ENCODE measurements at regions of chr1 and their contacts with region 1.

Region 1: DNA sequence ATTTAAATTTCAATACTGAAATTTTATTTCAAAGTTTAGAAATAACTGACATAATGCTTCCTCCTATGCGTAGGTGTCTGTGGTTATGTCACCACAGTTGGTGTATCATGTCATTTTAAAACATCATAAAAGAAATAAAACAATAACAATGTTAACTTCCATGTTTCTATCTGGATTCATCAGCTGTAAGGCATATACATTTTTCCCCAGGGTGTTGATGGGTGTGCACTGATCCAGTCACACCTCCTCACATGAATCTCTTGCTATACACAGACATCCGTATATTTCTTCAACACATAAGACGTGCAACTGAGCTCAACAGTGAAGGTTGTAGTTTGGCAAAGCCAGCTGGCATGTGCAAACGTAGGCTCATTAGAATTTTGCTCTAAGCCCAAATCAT is 6.2 kb downstream of the KCNA3 start:
- DNase-seq: peak; percentile 25
- H3K4me3 Mint-ChIP-seq: peak overlapping the region; percentile 73
- H3K27ac Mint-ChIP-seq: peak overlapping the region; percentile 79
- H3K4me1 Mint-ChIP-seq: peaks cover 12% of the 10 kb centered on the region
- H3K27me3 Mint-ChIP-seq: no peaks in the 10 kb centered on the region

Region 2: DNA sequence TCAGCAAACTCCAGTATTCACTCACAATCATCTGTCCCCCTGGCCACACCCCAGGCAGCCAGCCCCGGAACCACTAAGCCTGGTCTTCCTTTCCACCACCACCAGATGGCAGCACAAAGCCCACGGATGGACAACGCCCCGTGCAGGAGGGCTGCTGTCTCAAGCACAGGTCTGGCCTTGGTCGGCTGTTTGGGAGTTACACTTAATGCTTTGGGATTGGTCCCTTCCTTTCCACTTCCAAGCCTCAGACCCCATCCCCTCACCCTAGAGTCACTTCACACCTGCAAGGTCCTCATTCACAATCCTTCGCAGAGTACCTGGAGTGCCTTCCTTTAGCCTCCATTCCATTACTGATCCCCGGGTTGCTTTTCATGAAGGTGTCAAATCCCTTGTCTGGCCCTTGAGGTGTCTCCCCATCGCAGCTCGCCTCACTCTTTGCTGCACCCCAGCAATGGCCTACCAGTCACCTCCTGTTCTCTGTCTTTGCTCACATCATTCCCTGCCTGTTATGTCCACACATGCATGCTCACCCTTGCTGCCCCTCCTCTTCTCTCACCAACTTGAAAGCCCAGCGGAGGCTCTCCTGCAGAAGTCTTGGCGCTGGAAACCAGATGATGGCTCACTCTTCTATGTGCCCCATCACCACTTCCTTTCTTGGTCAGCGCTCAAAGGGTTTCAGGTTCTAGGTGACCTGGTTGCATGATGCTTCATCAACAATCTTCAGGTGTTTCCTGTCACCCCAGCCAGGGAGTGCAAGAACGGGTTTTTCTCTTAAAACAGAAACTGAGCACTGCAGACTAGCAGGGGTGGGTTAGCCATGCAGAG is 37.5 kb before region 1 on chr1:
- CTCF ChIA-PET with region 1: interaction called, 7 read pairs
- POLR2A ChIA-PET with region 1: interaction called, 206 read pairs
- DNase-seq: peak; percentile 92
- H3K4me3 Mint-ChIP-seq: no peak overlapping the region
- H3K27ac Mint-ChIP-seq: no peak overlapping the region
- H3K4me1 Mint-ChIP-seq: peaks cover 68% of the 10 kb centered on the region
- H3K27me3 Mint-ChIP-seq: no peaks in the 10 kb centered on the region

Region 3: DNA sequence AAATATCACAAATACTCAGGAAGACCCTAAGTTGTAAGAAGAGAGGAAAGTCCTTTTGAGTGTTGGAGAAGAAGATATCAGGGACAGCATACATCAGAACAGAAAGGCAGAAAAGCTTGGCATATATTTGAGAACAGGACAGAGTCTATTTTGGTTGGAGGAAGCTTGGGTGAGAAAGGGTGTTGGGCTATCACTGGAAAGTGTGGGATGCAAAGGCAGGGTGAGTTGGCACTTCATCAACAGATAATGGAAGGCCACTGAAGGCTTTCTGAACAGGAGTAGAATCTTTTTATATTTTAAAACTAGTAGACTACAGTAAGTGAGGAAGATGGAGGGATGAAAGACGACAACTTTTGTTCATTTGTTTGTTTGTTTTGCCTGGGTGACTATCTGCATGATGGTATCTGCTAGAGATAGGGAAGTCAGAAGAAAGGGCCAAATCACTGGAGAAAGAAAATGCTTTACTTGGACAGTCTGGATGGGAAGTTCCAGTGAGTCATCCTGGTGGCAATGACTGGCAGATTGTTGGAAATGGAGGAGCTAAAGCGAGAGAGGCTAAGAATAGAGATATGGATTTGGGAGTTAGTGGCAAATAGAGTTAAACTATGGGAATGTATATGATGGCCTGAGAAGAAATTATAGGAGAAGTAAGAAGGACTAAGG is 28.7 kb before region 1 on chr1:
- CTCF ChIA-PET with region 1: interaction called, 16 read pairs
- POLR2A ChIA-PET with region 1: interaction called, 206 read pairs
- DNase-seq: no peak
- H3K4me3 Mint-ChIP-seq: no peak overlapping the region
- H3K27ac Mint-ChIP-seq: peak overlapping the region; percentile 24
- H3K4me1 Mint-ChIP-seq: peaks cover 94% of the 10 kb centered on the region
- H3K27me3 Mint-ChIP-seq: no peaks in the 10 kb centered on the region

Region 4: DNA sequence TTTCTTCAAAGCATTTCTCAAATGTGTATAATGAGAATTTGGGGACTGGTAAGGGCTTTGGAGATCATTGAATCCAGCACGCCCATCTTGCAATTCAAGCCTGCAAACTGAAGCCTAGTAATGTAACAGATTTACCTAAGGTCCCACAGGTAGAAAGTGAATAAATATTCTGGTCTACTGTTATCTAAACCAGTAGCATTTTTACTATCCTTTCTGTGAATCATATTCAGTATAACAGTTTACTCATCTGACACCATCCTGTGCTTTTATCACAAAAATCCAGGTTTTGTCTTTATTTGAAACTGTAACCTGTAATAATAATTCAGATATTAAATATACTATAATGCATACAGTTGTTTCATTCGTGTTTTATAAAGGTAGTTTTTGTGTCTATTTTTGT is 11.2 kb before region 1 on chr1:
- CTCF ChIA-PET with region 1: interaction called, 5 read pairs
- POLR2A ChIA-PET with region 1: interaction called, 157 read pairs
- DNase-seq: no peak
- H3K4me3 Mint-ChIP-seq: no peak overlapping the region
- H3K27ac Mint-ChIP-seq: no peak overlapping the region
- H3K4me1 Mint-ChIP-seq: peaks cover 44% of the 10 kb centered on the region
- H3K27me3 Mint-ChIP-seq: no peaks in the 10 kb centered on the region